CD4-positive, alpha-beta memory T cell (primary cell): ENCODE measurements at regions of chr11 and their contacts with region 1.

Region 1: GRCh38 chr11:59822989-59823566 is 12.5 kb upstream of the MRPL16 start:
- DNase-seq: peak; percentile 26 to 39 (median 33)
- H3K4me3 ChIP-seq: no peak overlapping the region
- H3K4me3 Mint-ChIP-seq: peak overlapping the region in 1 of 8 donors; percentile 52
- H3K27ac ChIP-seq: no peak overlapping the region
- H3K27ac Mint-ChIP-seq: peak overlapping the region in 1 of 7 donors; percentile 5
- H3K4me1 ChIP-seq: no peaks in the 10 kb centered on the region
- H3K4me1 Mint-ChIP-seq: peaks cover 6 to 14% (median 11%) of the 10 kb centered on the region in 4 donors
- H3K27me3 ChIP-seq: no peaks in the 10 kb centered on the region
- H3K27me3 Mint-ChIP-seq: no peaks in the 10 kb centered on the region

Region 2: DNA sequence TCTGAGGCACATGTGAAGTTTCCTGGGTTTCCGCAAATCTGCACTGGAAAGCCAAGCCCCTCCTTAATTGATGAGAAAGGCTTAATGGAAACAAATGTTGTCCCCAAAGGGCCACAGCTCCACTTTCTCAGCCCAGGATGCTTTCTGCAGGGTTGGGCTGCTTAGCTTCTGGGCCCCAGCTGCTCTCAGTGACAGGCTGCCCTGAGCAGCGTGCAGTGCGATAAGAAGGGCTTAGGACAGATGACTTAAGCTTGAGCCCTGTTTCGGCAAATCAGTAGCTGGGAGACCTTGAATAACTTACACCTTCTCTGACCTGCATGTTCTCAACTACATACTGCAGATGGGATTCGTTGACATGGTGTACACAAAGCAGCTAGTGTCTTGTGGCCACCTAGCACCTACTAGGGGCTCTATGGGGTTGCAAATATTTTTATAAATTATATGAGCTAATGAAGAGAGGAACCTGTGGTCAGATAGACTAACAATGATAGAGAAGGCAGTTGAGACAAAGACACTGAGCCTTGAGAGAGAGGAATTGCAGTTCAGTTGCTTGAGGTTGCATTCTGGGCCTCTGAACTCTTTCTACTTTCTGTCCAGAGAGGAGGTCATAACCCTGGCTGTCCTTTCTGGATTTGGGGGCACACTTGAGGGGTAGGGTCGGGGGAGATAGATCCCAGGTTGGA is 56.4 kb before region 1 on chr11:
- CTCF ChIA-PET with region 1: no interaction called
- POLR2A ChIA-PET with region 1: no interaction called
- intact Hi-C with region 1: no loop called
- DNase-seq: no peak
- H3K4me3 ChIP-seq: no peak overlapping the region
- H3K4me3 Mint-ChIP-seq: peak overlapping the region in 7 of 8 donors; percentile 3 to 67 (median 52)
- H3K27ac ChIP-seq: no peak overlapping the region
- H3K27ac Mint-ChIP-seq: peak overlapping the region in 6 of 7 donors; percentile 4 to 84 (median 18)
- H3K4me1 ChIP-seq: peaks cover 49% of the 10 kb centered on the region
- H3K4me1 Mint-ChIP-seq: peaks cover 13 to 29% (median 22%) of the 10 kb centered on the region in 4 donors
- H3K27me3 ChIP-seq: no peaks in the 10 kb centered on the region
- H3K27me3 Mint-ChIP-seq: peaks cover 0 to 2% of the 10 kb centered on the region in 2 donors

Region 3: GRCh38 chr11:59857444-59858434 is 34.7 kb after region 1 on chr11:
- CTCF ChIA-PET with region 1: interaction called, 3 read pairs
- POLR2A ChIA-PET with region 1: no interaction called
- intact Hi-C with region 1: loop called (anchors 1 kb)
- DNase-seq: peak in 4 of 5 donors; percentile 1 to 67 (median 12)
- H3K4me3 ChIP-seq: no peak overlapping the region
- H3K4me3 Mint-ChIP-seq: peak overlapping the region in 7 of 8 donors; percentile 0 to 64 (median 35)
- H3K27ac ChIP-seq: no peak overlapping the region
- H3K27ac Mint-ChIP-seq: peak overlapping the region in 5 of 7 donors; percentile 14 to 83 (median 62)
- H3K4me1 ChIP-seq: peaks cover 16% of the 10 kb centered on the region
- H3K4me1 Mint-ChIP-seq: peaks cover 13 to 35% (median 22%) of the 10 kb centered on the region in 4 donors
- H3K27me3 ChIP-seq: no peaks in the 10 kb centered on the region
- H3K27me3 Mint-ChIP-seq: no peaks in the 10 kb centered on the region

Region 4: GRCh38 chr11:59918987-59919589 is 96.0 kb after region 1 on chr11:
- CTCF ChIA-PET with region 1: interaction called, 22 read pairs
- POLR2A ChIA-PET with region 1: no interaction called
- intact Hi-C with region 1: no loop called
- DNase-seq: peak in 1 of 5 donors; percentile 4
- H3K4me3 ChIP-seq: no peak overlapping the region
- H3K4me3 Mint-ChIP-seq: no peak overlapping the region
- H3K27ac ChIP-seq: no peak overlapping the region
- H3K27ac Mint-ChIP-seq: no peak overlapping the region
- H3K4me1 ChIP-seq: no peaks in the 10 kb centered on the region
- H3K4me1 Mint-ChIP-seq: no peaks in the 10 kb centered on the region
- H3K27me3 ChIP-seq: no peaks in the 10 kb centered on the region
- H3K27me3 Mint-ChIP-seq: peaks cover 1 to 2% of the 10 kb centered on the region in 2 donors

Region 5: DNA sequence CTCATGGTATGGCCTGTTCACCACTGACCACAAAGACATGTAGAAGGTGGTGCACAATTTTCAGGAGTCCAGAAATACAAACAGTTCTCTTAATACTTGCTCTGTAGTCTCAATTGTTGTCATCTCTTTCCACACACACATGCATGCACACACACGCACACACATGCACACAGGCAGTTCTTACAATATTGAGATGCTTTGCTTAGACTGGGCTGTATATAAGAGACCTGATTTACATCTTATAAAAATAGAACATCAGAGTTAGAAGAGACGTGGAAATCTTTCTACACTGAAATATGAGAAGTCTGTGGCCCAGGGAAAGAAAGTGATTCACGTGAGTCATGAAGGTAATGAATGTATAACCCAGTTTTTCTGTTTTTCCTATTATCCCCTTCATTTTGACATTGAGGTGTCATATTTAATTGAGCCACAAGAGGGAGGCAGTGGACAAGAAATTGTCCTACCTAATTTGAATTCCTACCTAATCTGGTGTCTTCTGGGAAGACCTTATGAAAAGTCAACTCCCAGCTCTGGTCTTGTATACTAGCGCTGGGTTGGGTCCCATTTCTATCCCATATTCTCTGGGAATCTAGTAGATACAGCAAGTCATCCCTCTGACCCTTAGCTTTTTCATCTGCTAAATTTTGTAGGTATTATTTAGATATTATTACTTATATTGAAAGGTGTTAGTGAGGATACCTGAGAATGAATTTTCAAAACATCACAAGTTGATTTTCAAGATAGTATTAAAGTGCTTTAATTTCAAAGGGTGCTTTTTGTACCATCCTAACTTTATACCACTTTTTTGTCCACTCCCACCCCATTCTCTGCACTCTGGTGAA is 442.5 kb after region 1 on chr11:
- CTCF ChIA-PET with region 1: no interaction called
- POLR2A ChIA-PET with region 1: no interaction called
- intact Hi-C with region 1: loop called (anchors 5 kb)
- DNase-seq: peak in 2 of 5 donors; percentile 1 to 7
- H3K4me3 ChIP-seq: no peak overlapping the region
- H3K4me3 Mint-ChIP-seq: no peak overlapping the region
- H3K27ac ChIP-seq: no peak overlapping the region
- H3K27ac Mint-ChIP-seq: no peak overlapping the region
- H3K4me1 ChIP-seq: no peaks in the 10 kb centered on the region
- H3K4me1 Mint-ChIP-seq: no peaks in the 10 kb centered on the region
- H3K27me3 ChIP-seq: no peaks in the 10 kb centered on the region
- H3K27me3 Mint-ChIP-seq: peaks cover 3 to 6% of the 10 kb centered on the region in 2 donors